ENCODE measurements at regions of chr6 and their contacts with region 1.

Region 1: DNA sequence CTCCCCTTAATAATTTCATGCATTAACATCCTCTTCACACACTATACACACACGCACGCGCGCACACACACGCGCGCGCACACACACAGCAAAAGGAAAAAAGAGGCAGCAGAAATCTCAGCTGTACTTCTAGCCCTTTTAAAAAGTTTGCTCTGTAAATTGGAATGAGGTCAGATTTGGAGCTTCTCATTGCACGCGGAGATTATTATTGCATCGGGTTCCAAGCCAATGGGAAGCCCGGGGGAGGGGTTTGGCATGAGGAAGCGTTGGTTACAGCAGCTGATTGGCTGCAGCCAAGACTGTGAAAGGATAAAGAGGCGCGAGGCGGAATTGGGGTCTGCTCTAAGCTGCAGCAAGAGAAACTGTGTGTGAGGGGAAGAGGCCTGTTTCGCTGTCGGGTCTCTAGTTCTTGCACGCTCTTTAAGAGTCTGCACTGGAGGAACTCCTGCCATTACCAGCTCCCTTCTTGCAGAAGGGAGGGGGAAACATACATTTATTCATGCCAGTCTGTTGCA is at the start of gene SOX4:
- ATAC-seq: peak; percentile 55 to 81 (median 77)
- H3K4me3 ChIP-seq: peak within 1 kb of the TSS; percentile 57 to 97 (median 92)
- H3K27ac ChIP-seq: peak within 1 kb of the TSS; percentile 92 to 93
- H3K4me1 ChIP-seq: peaks cover 7 to 15% of the 10 kb centered on the region in 2 donors
- total RNA-seq, gene SOX4: 4.5 to 195 (median 137) TPM

Region 2: DNA sequence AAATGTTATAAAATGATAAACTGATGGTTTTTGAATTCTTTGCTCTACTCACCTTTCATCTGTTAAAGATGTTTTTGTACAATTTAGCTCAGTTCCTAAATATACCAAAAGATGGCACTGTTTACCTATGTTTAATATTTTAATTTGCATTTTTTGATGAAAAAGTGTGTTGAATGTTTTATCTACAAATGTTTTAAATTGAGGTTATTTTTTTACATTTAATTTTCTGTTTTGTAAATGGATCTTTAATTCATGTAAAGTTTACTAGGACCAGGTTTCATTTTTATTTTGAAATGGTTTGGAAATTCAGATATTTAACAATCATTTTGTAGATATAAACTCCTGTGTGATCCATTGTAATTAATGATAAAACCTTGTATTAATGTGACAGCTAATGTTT is 1029.2 kb before region 1 on chr6:
- in situ Hi-C with region 1: loop called in 6 of 9 experiments (anchors 10 to 25 kb)
- ATAC-seq: no peak
- H3K4me3 ChIP-seq: no peak overlapping the region
- H3K27ac ChIP-seq: no peak overlapping the region
- H3K4me1 ChIP-seq: peaks cover 10 to 43% of the 10 kb centered on the region in 2 donors

Region 3: GRCh38 chr6:20688710-20689500 is 904.6 kb before region 1 on chr6:
- in situ Hi-C with region 1: no loop called
- ATAC-seq: no peak
- H3K4me3 ChIP-seq: no peak overlapping the region
- H3K27ac ChIP-seq: no peak overlapping the region
- H3K4me1 ChIP-seq: peaks cover 0 to 5% of the 10 kb centered on the region in 2 donors

Region 4: GRCh38 chr6:20873425-20874190 is 719.9 kb before region 1 on chr6:
- in situ Hi-C with region 1: loop called in 1 of 9 experiments (anchors 25 kb)
- ATAC-seq: no peak
- H3K4me3 ChIP-seq: no peak overlapping the region
- H3K27ac ChIP-seq: no peak overlapping the region
- H3K4me1 ChIP-seq: peaks cover 28 to 39% of the 10 kb centered on the region in 2 donors

Region 5: GRCh38 chr6:20919677-20920385 is 673.6 kb before region 1 on chr6:
- in situ Hi-C with region 1: loop called in 1 of 9 experiments (anchors 25 kb)
- ATAC-seq: no peak
- H3K4me3 ChIP-seq: no peak overlapping the region
- H3K27ac ChIP-seq: no peak overlapping the region
- H3K4me1 ChIP-seq: no peaks in the 10 kb centered on the region

Region 6: DNA sequence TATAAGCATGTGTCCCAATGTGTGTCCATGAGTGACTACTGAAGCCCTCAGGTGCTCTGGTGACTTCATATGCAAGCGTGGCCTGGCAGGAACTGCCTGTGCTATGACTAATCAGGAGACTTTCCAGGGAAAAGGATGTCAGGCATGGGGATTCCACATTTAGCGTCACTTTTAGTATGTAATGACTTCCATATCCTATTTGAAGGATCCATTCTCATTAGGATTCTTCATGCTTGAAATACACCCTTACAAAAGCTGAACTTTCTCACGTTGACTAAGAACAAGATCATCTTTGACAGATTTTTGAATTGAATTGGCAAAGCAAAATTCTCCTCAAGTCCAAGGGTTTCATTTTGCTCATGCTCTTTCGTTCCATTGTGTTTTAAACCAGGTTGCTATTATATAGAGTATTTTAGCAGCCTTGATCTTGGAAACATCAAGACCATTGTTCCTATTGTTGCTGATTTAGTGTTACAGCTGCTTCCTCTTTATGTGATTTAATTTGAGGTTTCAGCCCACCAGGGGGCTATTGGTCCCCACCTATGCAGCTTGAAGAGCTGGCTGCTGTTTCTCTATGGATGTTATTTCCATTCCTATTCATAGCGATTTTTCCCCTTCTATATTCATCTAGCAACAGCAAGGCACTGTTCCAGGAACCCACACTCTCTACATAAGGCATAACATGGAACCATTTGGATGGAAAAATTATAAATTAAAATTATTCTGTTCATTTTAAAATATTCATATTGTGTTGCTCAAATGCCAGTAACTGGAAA is 640.6 kb before region 1 on chr6:
- in situ Hi-C with region 1: loop called in 1 of 9 experiments (anchors 25 kb)
- ATAC-seq: peak; percentile 67 to 98 (median 86)
- H3K4me3 ChIP-seq: no peak overlapping the region
- H3K27ac ChIP-seq: peak overlapping the region in 1 of 2 donors; percentile 3
- H3K4me1 ChIP-seq: peaks cover 36 to 39% of the 10 kb centered on the region in 2 donors

Measured in motor neuron (in vitro differentiated cells).